ENCODE measurements at regions of chr2 and their contacts with region 1.

Region 1: DNA sequence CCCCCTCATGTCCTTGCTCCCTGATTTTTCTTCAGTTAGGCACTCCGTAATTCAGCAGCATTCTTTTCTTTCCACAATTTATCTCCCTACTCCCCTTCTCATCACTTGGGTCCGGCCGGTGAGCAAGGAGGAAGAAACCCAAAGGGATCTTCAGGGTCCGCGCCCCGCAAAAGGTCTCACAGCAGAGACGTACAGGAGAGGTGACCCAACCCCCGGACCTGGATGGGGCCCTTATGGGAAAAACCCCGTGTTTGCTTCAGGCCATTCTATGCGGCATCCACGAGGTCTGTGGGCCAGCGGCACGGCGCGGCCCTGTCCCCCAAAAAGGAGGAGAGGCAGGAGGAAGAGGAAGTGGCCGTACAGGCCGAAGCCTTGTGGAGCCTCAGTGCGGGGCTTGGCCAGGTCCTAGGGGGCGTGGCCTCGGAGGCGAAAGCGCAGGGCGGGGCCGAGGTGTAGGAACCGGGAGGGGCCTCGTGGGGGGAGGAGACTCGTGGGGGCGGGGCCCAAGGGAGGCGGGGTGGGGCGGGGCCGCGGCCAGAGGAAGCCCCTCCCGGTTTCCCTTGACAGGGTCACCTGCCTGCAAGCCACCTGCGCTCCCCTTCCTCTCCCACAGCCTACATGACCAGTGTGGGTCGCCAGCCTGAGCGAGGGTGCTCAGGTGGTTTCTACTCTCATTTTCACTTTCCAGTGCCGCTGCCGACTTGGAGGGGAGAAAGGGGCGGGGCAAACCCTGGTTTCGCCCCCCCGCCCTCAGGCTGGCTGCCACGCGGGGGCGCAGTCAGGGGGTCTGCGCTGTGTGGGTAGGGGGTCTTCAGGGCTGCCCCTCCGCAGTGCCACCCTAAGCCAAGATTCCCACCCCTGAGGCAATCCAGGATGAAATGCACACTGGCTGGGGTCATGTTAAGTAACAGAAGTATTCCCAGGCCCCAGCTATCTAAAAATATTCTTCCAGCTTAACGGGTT is 156.4 kb upstream of the XPO1 start:
- DNase-seq: peak; percentile 93 to 94
- ATAC-seq: peak; percentile 90 to 91
- H3K4me3 ChIP-seq: peak overlapping the region; percentile 86 to 99 (median 94)
- H3K27ac ChIP-seq: peak overlapping the region; percentile 95 to 99 (median 97)
- H3K4me1 ChIP-seq: peaks cover 10 to 11% of the 10 kb centered on the region in 2 donors
- H3K27me3 ChIP-seq: no peaks in the 10 kb centered on the region
- CTCF ChIP-seq: peak; percentile 50 to 75 (median 61)
- POLR2A ChIP-seq: peak; percentile 43 to 68

Region 2: DNA sequence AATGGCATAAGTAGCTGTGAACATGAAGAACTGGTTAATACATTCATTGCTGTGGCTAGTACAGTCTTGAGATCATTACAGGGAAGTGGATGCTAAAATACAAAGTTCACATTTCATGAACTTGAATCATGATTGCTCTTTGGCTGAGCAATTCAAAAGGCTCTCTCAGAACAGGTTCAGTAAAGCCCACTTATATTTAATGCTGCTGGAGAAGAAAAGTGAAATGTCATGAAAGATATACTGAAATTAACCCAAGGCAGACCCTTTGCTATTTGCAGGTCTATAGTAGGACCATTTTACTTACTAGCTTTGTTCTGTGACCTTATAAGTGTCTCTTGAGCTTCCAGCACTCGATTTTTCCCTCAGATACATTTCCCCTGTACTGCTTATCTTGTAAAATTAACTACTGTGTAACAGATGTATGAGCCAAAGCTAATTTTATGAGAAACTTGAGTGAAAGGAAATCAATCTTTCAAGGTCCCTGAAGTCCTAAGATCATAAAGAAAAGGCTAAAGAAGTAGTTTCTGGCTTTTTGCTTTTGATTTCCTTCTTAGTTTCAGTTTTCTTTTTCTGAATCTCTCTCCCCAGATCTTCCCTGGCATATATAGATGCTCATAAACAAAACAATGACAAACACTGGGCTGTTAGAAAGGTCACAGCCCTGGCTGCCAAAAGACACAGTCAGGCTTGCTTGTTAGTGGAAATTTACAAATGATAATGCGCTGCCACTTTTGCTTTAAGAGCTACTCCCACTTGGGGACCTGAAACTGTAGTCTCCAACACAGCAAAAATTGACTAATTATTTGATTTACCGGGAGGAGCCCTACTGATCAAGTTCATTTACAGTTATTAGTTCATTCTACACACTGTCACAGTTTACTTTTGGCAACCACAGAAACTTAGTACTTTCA is 23.7 kb before region 1 on chr2:
- in situ Hi-C with region 1: no loop called
- intact Hi-C with region 1: loop called (anchors 2 kb)
- DNase-seq: peak; percentile 56 to 74
- ATAC-seq: peak; percentile 93 to 96
- H3K4me3 ChIP-seq: peak overlapping the region; percentile 24 to 51 (median 38)
- H3K27ac ChIP-seq: peak overlapping the region; percentile 85 to 88 (median 86)
- H3K4me1 ChIP-seq: peaks cover 17 to 19% of the 10 kb centered on the region in 2 donors
- H3K27me3 ChIP-seq: no peaks in the 10 kb centered on the region
- CTCF ChIP-seq: no peak
- POLR2A ChIP-seq: no peak

Region 3: DNA sequence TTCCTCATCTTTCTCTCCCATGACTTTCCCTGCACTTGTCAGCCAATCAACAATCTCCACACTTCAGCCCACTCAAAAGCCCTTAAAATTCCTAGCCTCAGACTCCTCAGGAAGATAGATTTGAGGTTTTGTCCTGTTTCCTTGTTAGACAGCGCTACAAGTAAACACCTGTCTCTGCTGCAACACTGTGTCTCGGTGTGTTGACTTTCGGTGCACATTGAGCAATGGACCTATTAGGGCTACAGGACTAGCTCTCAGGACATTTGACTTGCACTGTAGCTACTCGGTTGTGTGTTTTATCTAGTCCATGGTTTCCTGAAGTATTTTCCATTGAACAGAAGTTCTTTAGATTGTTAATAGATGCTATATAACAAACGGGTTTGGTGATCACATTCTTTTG is 15.5 kb before region 1 on chr2:
- in situ Hi-C with region 1: no loop called
- intact Hi-C with region 1: loop called (anchors 2 kb)
- DNase-seq: no peak
- ATAC-seq: no peak
- H3K4me3 ChIP-seq: no peak overlapping the region
- H3K27ac ChIP-seq: no peak overlapping the region
- H3K4me1 ChIP-seq: no peaks in the 10 kb centered on the region
- H3K27me3 ChIP-seq: no peaks in the 10 kb centered on the region
- CTCF ChIP-seq: no peak
- POLR2A ChIP-seq: no peak

Region 4: GRCh38 chr2:61854474-61855182 is 160.0 kb after region 1 on chr2:
- in situ Hi-C with region 1: no loop called
- intact Hi-C with region 1: loop called (anchors 10 kb)
- DNase-seq: peak; percentile 90 to 93
- ATAC-seq: peak; percentile 97 to 98
- H3K4me3 ChIP-seq: peak overlapping the region; percentile 80 to 89 (median 82)
- H3K27ac ChIP-seq: peak overlapping the region; percentile 89 to 93 (median 90)
- H3K4me1 ChIP-seq: peaks cover 8 to 13% of the 10 kb centered on the region in 2 donors
- H3K27me3 ChIP-seq: no peaks in the 10 kb centered on the region
- CTCF ChIP-seq: no peak
- POLR2A ChIP-seq: no peak